ENCODE measurements at regions of chr3 and their contacts with region 1.

Region 1: GRCh38 chr3:107574650-107575049 is 51.9 kb downstream of the BBX start:
- DNase-seq: peak; percentile 22
- H3K4me3 Mint-ChIP-seq: no peak overlapping the region
- H3K27ac Mint-ChIP-seq: no peak overlapping the region
- H3K4me1 Mint-ChIP-seq: peaks cover 27% of the 10 kb centered on the region
- H3K27me3 Mint-ChIP-seq: no peaks in the 10 kb centered on the region

Region 2: DNA sequence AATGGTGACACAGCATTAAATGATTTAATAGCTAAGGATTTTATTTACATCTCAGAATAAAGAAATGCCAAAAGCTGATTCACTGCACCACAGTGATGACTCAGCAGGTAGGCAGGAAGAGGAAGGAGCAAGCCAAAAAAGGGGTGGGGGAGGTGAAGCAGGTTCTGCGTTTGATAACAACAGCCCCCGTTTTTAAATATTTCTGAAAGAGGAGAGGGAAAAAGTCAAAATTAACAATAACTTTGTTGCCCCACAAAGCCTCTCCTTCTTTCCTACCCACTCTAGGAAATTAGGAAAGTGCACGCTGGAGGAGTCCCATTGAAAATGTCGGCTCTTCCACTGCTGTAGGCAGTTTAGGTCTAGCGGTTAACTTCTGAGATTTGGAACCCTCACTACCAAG is 207.3 kb before region 1 on chr3:
- CTCF ChIA-PET with region 1: no interaction called
- intact Hi-C with region 1: no loop called
- DNase-seq: peak; percentile 48
- H3K4me3 Mint-ChIP-seq: no peak overlapping the region
- H3K27ac Mint-ChIP-seq: no peak overlapping the region
- H3K4me1 Mint-ChIP-seq: peaks cover 5% of the 10 kb centered on the region
- H3K27me3 Mint-ChIP-seq: peaks cover 10% of the 10 kb centered on the region

Region 3: DNA sequence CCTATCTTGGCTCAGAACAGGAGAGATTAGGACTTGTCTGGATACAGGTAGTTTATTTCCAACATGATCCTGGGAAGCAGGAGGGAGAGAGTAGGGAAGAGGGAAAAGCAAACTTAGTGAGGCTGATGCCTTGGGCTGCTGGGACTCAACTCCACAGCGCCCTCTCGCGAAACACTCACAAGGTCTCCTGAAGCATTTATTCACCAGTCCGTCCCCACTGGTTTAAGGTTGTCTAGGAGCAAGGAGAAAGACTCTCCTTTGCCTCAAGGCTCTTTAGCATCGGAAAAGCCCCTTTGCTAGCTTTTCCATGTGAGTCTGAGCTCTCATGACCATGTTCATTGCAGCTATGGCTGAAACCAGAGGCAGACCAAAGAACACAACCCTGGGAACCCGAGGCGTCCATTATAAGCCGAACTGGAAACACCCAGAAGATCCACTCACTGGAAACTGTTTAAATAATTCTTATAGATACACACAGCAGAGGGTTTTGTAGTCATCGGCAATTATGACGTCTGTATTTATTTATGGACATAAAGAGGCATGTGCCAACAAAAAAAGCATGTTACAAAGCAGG is 271.7 kb after region 1 on chr3:
- CTCF ChIA-PET with region 1: interaction called, 3 read pairs
- intact Hi-C with region 1: loop called (anchors 5 kb)
- DNase-seq: peak; percentile 65
- H3K4me3 Mint-ChIP-seq: no peak overlapping the region
- H3K27ac Mint-ChIP-seq: no peak overlapping the region
- H3K4me1 Mint-ChIP-seq: no peaks in the 10 kb centered on the region
- H3K27me3 Mint-ChIP-seq: no peaks in the 10 kb centered on the region